ENCODE measurements at regions of chr12 and their contacts with region 1.

Region 1: GRCh38 chr12:26318661-26319068 is 123.3 kb downstream of the SSPN start:
- DNase-seq: peak; percentile 50
- ATAC-seq: peak; percentile 85
- H3K4me3 Mint-ChIP-seq: peak overlapping the region; percentile 11
- H3K27ac Mint-ChIP-seq: peak overlapping the region; percentile 83
- H3K4me1 Mint-ChIP-seq: peaks cover 39% of the 10 kb centered on the region
- H3K27me3 Mint-ChIP-seq: no peaks in the 10 kb centered on the region
- CTCF ChIP-seq: no peak

Region 2: GRCh38 chr12:25533150-25533549 is 785.5 kb before region 1 on chr12:
- CTCF ChIA-PET with region 1: no interaction called
- POLR2A ChIA-PET with region 1: no interaction called
- intact Hi-C with region 1: no loop called
- DNase-seq: no peak
- ATAC-seq: no peak
- H3K4me3 Mint-ChIP-seq: no peak overlapping the region
- H3K27ac Mint-ChIP-seq: no peak overlapping the region
- H3K4me1 Mint-ChIP-seq: no peaks in the 10 kb centered on the region
- H3K27me3 Mint-ChIP-seq: peaks cover 20% of the 10 kb centered on the region
- CTCF ChIP-seq: no peak

Region 3: DNA sequence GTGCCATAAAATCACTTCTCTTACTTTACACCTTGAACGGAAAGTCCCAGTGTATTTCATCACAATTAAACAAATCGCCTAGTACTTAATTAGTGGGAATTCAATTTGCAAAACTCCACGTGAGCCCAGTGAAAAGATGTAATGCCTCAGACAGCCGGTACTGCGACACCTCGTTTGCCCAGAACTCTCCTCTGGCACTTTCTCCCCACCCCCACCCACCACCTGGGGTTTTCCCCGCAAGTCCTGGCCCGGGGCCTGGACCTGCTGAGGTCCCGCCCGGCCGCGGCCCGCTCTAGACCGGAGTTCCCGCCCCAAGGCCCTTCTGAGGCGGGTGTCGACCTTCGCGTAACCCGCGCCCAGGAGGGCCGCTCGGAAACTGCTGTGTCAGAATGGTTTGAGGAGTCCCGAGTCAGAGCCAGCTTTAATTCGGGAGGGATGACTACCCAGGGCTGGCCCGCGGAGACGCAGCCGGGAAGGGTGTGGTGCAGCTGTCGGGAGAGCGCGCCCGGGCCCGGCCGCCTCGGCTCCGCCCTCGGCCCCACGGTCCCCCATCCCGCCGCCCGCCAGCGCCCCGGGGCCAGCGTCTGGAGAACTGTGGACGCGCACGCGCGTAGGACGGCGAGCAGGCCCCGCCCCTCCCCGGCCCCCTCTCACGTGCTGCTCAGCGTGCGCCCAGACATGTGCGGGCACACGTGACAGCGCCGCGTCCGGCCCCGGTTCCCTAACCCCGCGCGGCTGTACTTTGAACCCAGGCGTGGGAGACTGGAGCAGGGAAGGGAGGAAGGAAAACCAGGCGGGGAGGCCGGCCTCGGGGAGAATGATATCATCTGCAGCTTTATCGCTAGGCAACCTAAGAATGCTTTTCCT is 204.6 kb before region 1 on chr12:
- CTCF ChIA-PET with region 1: interaction called, 9 read pairs
- POLR2A ChIA-PET with region 1: interaction called, 5 read pairs
- intact Hi-C with region 1: loop called (anchors 1 kb)
- DNase-seq: peak; percentile 77
- ATAC-seq: peak; percentile 80
- H3K4me3 Mint-ChIP-seq: peak overlapping the region; percentile 85
- H3K27ac Mint-ChIP-seq: peak overlapping the region; percentile 92
- H3K4me1 Mint-ChIP-seq: peaks cover 58% of the 10 kb centered on the region
- H3K27me3 Mint-ChIP-seq: no peaks in the 10 kb centered on the region
- CTCF ChIP-seq: no peak

Region 4: DNA sequence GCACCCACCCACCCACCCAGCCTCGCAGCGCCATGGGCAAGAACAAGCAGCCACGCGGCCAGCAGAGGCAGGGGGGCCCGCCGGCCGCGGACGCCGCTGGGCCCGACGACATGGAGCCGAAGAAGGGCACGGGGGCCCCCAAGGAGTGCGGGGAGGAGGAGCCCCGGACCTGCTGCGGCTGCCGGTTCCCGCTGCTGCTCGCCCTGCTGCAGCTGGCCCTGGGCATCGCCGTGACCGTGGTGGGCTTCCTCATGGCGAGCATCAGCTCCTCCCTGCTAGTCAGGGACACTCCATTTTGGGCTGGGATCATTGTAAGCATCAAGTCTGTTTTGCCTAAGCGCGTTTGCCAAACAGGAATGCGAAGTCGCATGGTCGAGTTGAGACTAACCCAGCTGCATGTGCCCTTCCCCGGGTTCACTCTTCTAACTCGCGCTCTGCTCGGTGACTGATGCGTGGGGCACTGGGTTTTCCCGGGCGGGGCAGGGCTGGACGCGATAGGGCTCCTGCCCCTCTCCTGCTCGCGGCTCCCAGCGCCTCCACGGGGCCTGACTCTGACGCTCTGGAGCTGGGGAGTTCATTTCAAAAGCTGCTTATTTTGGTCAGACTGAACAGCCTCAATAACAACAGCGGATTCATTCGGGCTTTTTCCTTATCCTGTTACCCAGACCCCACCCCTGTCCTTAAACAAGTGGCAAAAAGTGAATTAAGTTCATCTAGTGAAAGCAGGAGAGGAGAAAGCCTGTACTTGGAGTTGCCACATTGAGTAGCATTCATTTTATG is 122.8 kb before region 1 on chr12:
- CTCF ChIA-PET with region 1: no interaction called
- POLR2A ChIA-PET with region 1: interaction called, 7 read pairs
- intact Hi-C with region 1: loop called (anchors 5 kb)
- DNase-seq: peak; percentile 46
- ATAC-seq: peak; percentile 82
- H3K4me3 Mint-ChIP-seq: peak overlapping the region; percentile 94
- H3K27ac Mint-ChIP-seq: peak overlapping the region; percentile 87
- H3K4me1 Mint-ChIP-seq: peaks cover 13% of the 10 kb centered on the region
- H3K27me3 Mint-ChIP-seq: no peaks in the 10 kb centered on the region
- CTCF ChIP-seq: no peak

Region 5: GRCh38 chr12:26251600-26251999 is 67.1 kb before region 1 on chr12:
- CTCF ChIA-PET with region 1: no interaction called
- POLR2A ChIA-PET with region 1: no interaction called
- intact Hi-C with region 1: no loop called
- DNase-seq: no peak
- ATAC-seq: no peak
- H3K4me3 Mint-ChIP-seq: no peak overlapping the region
- H3K27ac Mint-ChIP-seq: no peak overlapping the region
- H3K4me1 Mint-ChIP-seq: peaks cover 6% of the 10 kb centered on the region
- H3K27me3 Mint-ChIP-seq: no peaks in the 10 kb centered on the region
- CTCF ChIP-seq: no peak

Region 6: GRCh38 chr12:26298785-26299621 is 19.7 kb before region 1 on chr12:
- CTCF ChIA-PET with region 1: no interaction called
- POLR2A ChIA-PET with region 1: interaction called, 26 read pairs
- intact Hi-C with region 1: loop called (anchors 1 kb)
- DNase-seq: no peak
- ATAC-seq: peak; percentile 98
- H3K4me3 Mint-ChIP-seq: peak overlapping the region; percentile 63
- H3K27ac Mint-ChIP-seq: peak overlapping the region; percentile 80
- H3K4me1 Mint-ChIP-seq: peaks cover 34% of the 10 kb centered on the region
- H3K27me3 Mint-ChIP-seq: no peaks in the 10 kb centered on the region
- CTCF ChIP-seq: no peak

Measured in activated B cell treated with CpG ODN at 0.5 μM for 24 hours (primary cell).